ENCODE measurements at regions of chr4 and their contacts with region 1.

Region 1: GRCh38 chr4:22607382-22607781 is 85.4 kb upstream of the GBA3 start:
- DNase-seq: peak in 8 of 9 experiments; percentile 11 to 65 (median 40)
- ATAC-seq: peak; percentile 99
- H3K4me3 ChIP-seq: no peak overlapping the region
- H3K4me3 Mint-ChIP-seq: no peak overlapping the region
- H3K27ac ChIP-seq: no peak overlapping the region
- H3K27ac Mint-ChIP-seq: peak overlapping the region; percentile 20
- H3K4me1 ChIP-seq: peaks cover 13% of the 10 kb centered on the region
- H3K4me1 Mint-ChIP-seq: peaks cover 40% of the 10 kb centered on the region
- H3K27me3 ChIP-seq: no peaks in the 10 kb centered on the region
- H3K27me3 Mint-ChIP-seq: no peaks in the 10 kb centered on the region
- CTCF ChIP-seq: peak; percentile 43

Region 2: DNA sequence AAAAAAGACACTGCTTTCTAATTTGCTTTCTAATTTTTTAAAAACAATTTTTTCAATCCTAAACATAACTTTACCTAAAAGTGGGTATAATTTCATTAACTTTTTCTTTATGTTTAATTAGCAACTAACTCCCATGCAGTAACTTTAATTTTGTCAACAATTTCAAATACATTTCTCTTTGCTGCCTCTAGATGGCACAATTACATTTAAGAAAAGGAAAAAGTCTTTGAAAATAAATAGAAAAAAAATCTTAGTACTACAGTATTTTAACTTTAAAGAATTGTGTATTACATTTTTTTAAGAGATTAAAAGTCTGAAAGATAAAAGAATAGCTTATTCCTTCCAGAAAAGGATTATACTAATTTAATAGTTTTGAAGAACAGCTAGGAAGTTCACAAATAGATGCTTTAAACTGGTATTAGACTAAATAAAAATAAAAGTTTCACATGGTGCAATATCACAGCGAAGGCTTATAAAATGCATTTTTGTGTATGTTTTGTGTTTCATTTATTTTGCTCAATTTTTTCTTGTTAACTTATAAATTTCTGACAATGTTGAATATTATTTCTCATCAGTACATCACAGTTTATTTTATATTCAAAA is 196.6 kb before region 1 on chr4:
- CTCF ChIA-PET with region 1: interaction called, 19 read pairs
- POLR2A ChIA-PET with region 1: no interaction called
- intact Hi-C with region 1: loop called (anchors 1 to 2 kb)
- DNase-seq: peak in 1 of 9 experiments; percentile 14
- ATAC-seq: no peak
- H3K4me3 ChIP-seq: no peak overlapping the region
- H3K4me3 Mint-ChIP-seq: no peak overlapping the region
- H3K27ac ChIP-seq: no peak overlapping the region
- H3K27ac Mint-ChIP-seq: no peak overlapping the region
- H3K4me1 ChIP-seq: no peaks in the 10 kb centered on the region
- H3K4me1 Mint-ChIP-seq: no peaks in the 10 kb centered on the region
- H3K27me3 ChIP-seq: no peaks in the 10 kb centered on the region
- H3K27me3 Mint-ChIP-seq: no peaks in the 10 kb centered on the region
- CTCF ChIP-seq: peak; percentile 94

Region 3: DNA sequence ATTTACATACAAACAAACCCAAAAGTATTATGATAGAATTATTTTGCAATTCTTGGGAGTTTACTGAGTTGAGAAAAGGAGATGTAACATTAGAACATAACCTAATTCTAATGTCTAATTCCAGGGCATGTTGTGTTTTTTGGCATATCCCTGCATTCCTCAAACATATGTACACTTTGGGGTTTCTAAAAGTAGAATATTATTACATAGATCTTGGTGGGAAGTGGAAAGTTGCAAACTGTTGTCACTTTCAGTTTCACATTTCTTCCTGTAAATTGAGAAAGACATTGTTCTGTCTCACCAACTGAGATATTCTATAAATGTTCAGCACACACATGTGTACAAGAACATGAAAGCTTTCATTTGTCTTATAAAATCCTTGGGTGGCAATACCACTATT is 60.9 kb after region 1 on chr4:
- CTCF ChIA-PET with region 1: interaction called, 3 read pairs
- POLR2A ChIA-PET with region 1: no interaction called
- intact Hi-C with region 1: loop called in 1 of 2 experiments (anchors 5 kb)
- DNase-seq: peak in 1 of 9 experiments; percentile 10
- ATAC-seq: no peak
- H3K4me3 ChIP-seq: peak overlapping the region in 1 of 2 experiments; percentile 25
- H3K4me3 Mint-ChIP-seq: peak overlapping the region; percentile 59
- H3K27ac ChIP-seq: peak overlapping the region in 1 of 2 experiments; percentile 38
- H3K27ac Mint-ChIP-seq: peak overlapping the region; percentile 83
- H3K4me1 ChIP-seq: peaks cover 38% of the 10 kb centered on the region
- H3K4me1 Mint-ChIP-seq: peaks cover 53% of the 10 kb centered on the region
- H3K27me3 ChIP-seq: no peaks in the 10 kb centered on the region
- H3K27me3 Mint-ChIP-seq: no peaks in the 10 kb centered on the region
- CTCF ChIP-seq: no peak

Region 4: DNA sequence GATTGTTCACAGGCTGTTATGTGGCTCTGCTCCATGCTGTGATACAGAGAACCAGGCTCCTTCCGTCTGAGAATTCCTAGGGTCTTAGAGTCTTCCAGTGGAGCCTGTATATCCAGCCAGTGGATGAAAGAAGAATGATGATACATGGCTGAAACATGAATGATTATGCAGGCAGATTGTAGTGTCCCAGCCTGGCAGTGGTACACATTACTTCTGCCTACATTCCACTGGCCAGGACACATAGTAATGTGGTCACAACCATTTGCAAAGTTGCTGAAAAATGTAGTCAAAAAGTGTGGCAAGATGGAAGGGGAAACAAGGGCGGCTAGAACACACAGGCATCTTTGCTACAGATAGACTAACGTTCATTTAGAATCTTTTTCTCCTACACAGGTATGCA is 80.9 kb after region 1 on chr4:
- CTCF ChIA-PET with region 1: interaction called, 5 read pairs
- POLR2A ChIA-PET with region 1: no interaction called
- intact Hi-C with region 1: loop called (anchors 1 to 10 kb)
- DNase-seq: no peak
- ATAC-seq: no peak
- H3K4me3 ChIP-seq: no peak overlapping the region
- H3K4me3 Mint-ChIP-seq: no peak overlapping the region
- H3K27ac ChIP-seq: no peak overlapping the region
- H3K27ac Mint-ChIP-seq: no peak overlapping the region
- H3K4me1 ChIP-seq: peaks cover 8% of the 10 kb centered on the region
- H3K4me1 Mint-ChIP-seq: peaks cover 17% of the 10 kb centered on the region
- H3K27me3 ChIP-seq: no peaks in the 10 kb centered on the region
- H3K27me3 Mint-ChIP-seq: no peaks in the 10 kb centered on the region
- CTCF ChIP-seq: no peak

Measured in CD8-positive, alpha-beta T cell (primary cell).